Lower leg skin (tissue), 4 donors: ENCODE measurements at regions of chr19 and their contacts with region 1.

Region 1: GRCh38 chr19:1672038-1672768 is 19.8 kb upstream of the TCF3 start:
- DNase-seq: no peak
- H3K4me3 ChIP-seq: no peak overlapping the region
- CTCF ChIP-seq: peak in 1 of 3 donors; percentile 24
- POLR2A ChIP-seq: no peak

Region 2: GRCh38 chr19:1507763-1508509 is 164.3 kb before region 1 on chr19:
- intact Hi-C with region 1: no loop called
- DNase-seq: peak; percentile 92 to 98
- H3K4me3 ChIP-seq: no peak overlapping the region
- CTCF ChIP-seq: no peak
- POLR2A ChIP-seq: no peak

Region 3: GRCh38 chr19:1549332-1549945 is 122.8 kb before region 1 on chr19:
- intact Hi-C with region 1: loop called (anchors 5 kb)
- DNase-seq: no peak
- H3K4me3 ChIP-seq: no peak overlapping the region
- CTCF ChIP-seq: no peak
- POLR2A ChIP-seq: no peak

Region 4: GRCh38 chr19:1812469-1813196 is 140.4 kb after region 1 on chr19:
- intact Hi-C with region 1: loop called (anchors 10 kb)
- DNase-seq: peak; percentile 93 to 98
- H3K4me3 ChIP-seq: peak overlapping the region; percentile 27
- CTCF ChIP-seq: no peak
- POLR2A ChIP-seq: no peak

Region 5: GRCh38 chr19:1998712-1999708 is 326.8 kb after region 1 on chr19:
- intact Hi-C with region 1: no loop called
- DNase-seq: no peak
- H3K4me3 ChIP-seq: no peak overlapping the region
- CTCF ChIP-seq: no peak
- POLR2A ChIP-seq: no peak

Region 6: DNA sequence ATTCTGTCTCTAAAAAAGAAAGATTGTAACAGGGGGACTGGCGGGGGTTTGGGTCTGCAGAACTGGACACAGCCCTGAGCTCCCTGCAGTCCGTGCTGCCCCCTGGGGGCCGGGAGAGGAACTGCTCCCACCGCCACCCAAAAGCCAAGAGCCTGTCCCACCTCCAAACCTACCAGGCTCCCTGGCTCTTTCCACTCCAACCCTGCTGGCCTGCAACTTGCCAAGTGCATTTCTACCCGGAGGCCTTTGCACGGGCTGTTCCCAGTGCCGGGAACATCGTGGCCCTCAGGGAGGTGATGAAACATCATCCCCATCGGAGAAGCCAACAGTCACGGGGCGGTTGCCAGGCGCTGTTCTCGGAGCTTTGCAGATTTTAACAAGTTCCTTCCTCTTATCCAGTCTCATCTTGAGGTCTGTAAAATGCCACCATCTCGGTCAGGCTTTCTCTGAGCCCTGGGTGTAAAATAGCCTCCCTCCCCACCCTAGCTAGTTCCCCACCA is 1757.4 kb after region 1 on chr19:
- intact Hi-C with region 1: no loop called
- DNase-seq: peak; percentile 97 to 99
- H3K4me3 ChIP-seq: no peak overlapping the region
- CTCF ChIP-seq: peak in 1 of 3 donors; percentile 99
- POLR2A ChIP-seq: no peak

Region 7: GRCh38 chr19:3656073-3656746 is 1984.0 kb after region 1 on chr19:
- intact Hi-C with region 1: no loop called
- DNase-seq: no peak
- H3K4me3 ChIP-seq: no peak overlapping the region
- CTCF ChIP-seq: no peak
- POLR2A ChIP-seq: no peak